AG04450 (cell line): ENCODE measurements at regions of chr12 and their contacts with region 1.

Region 1: GRCh38 chr12:88580051-88580871 is at the start of gene KITLG:
- DNase-seq: peak; percentile 77
- H3K4me3 ChIP-seq: peak within 1 kb of the TSS; percentile 85
- H3K27ac ChIP-seq: peak within 1 kb of the TSS; percentile 68
- H3K27me3 ChIP-seq: no peaks in the 10 kb centered on the region
- CTCF ChIP-seq: peak; percentile 57
- polyA plus RNA-seq, gene KITLG: 25.2 and 35.3 TPM in 2 replicates

Region 2: DNA sequence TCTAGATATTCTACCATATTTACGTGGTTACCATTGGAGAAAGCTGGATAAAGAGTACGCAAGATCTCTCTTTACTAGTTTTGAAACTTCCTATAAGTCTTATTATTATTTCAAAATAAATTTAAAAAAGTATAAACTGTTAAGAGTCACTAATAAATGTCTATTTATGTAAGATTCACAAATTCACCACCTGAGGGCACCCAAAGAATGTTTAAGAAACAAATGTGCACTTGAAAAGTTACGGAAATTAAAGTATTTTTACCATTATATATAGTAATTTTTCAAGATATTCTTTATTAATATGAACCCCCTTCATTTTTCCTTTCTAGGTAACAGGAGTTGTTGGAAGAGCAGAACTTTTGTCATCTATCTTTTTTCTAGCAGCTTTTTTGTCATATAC is 426.3 kb before region 1 on chr12:
- CTCF ChIA-PET with region 1: interaction called, 15 read pairs
- POLR2A ChIA-PET with region 1: no interaction called
- DNase-seq: peak; percentile 20
- H3K4me3 ChIP-seq: no peak overlapping the region
- H3K27ac ChIP-seq: no peak overlapping the region
- H3K27me3 ChIP-seq: no peaks in the 10 kb centered on the region
- CTCF ChIP-seq: peak; percentile 41

Region 3: DNA sequence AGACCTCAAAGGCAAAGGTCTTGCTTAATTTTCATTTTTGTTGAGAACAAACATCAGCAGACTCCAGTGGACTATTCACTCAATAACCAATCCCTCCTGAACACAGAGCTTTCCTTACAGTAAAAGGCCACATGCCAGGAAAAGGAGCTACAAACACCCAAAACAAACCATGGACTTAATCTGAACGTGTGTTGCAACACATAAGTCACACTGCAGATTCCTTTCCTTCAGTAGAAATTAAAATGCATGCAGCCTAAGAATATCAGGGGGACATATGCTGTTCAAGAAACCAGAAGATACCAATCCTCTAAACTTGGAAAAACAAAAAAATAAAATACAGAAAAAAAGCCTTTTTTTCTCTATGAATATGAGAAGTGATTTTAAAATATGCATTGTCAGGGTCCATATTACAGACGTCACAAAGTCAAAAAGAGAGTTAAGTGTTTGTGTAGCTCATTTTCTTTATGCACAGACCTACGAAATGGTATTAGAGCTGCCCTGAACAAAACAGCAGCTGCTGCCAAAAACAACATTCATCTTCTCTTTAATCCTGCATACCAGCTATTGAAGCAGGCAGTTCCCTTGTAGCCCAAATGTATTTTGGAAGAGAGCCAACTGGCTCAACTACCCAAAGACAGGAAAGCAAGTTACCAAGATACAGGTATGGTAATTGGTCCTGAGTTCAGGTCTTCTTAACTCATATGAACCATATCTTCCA is 26.2 kb before region 1 on chr12:
- CTCF ChIA-PET with region 1: interaction called, 3 read pairs
- POLR2A ChIA-PET with region 1: interaction called, 12 read pairs
- DNase-seq: no peak
- H3K4me3 ChIP-seq: no peak overlapping the region
- H3K27ac ChIP-seq: no peak overlapping the region
- H3K27me3 ChIP-seq: no peaks in the 10 kb centered on the region
- CTCF ChIP-seq: no peak

Region 4: DNA sequence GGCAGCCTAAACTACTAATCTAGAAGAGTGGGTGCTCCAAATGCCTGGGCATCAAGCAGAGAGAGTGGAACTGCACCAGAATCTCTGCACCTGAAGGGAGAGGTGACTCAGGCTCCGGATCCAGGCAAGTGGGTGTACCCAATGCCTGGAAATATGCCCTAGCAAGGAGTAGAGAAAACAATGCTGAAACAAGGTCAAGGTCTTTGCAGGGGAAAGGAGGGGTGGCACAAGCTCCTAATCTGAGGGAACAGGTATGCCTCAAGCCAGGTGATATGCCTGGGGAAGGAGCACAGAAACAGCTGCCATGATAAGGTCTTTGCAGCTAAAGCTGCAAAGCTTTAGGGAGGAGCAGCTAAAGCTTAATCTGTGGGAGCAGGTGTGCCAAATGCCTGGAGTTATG is 136.0 kb after region 1 on chr12:
- CTCF ChIA-PET with region 1: no interaction called
- POLR2A ChIA-PET with region 1: no interaction called
- DNase-seq: no peak
- H3K4me3 ChIP-seq: no peak overlapping the region
- H3K27ac ChIP-seq: no peak overlapping the region
- H3K27me3 ChIP-seq: no peaks in the 10 kb centered on the region
- CTCF ChIP-seq: no peak

Region 5: GRCh38 chr12:88993651-88994050 is 413.4 kb after region 1 on chr12:
- CTCF ChIA-PET with region 1: interaction called, 18 read pairs
- POLR2A ChIA-PET with region 1: interaction called, 14 read pairs
- DNase-seq: peak; percentile 44
- H3K4me3 ChIP-seq: no peak overlapping the region
- H3K27ac ChIP-seq: no peak overlapping the region
- H3K27me3 ChIP-seq: no peaks in the 10 kb centered on the region
- CTCF ChIP-seq: peak; percentile 60